ENCODE measurements at regions of chr2 and their contacts with region 1.

Region 1: DNA sequence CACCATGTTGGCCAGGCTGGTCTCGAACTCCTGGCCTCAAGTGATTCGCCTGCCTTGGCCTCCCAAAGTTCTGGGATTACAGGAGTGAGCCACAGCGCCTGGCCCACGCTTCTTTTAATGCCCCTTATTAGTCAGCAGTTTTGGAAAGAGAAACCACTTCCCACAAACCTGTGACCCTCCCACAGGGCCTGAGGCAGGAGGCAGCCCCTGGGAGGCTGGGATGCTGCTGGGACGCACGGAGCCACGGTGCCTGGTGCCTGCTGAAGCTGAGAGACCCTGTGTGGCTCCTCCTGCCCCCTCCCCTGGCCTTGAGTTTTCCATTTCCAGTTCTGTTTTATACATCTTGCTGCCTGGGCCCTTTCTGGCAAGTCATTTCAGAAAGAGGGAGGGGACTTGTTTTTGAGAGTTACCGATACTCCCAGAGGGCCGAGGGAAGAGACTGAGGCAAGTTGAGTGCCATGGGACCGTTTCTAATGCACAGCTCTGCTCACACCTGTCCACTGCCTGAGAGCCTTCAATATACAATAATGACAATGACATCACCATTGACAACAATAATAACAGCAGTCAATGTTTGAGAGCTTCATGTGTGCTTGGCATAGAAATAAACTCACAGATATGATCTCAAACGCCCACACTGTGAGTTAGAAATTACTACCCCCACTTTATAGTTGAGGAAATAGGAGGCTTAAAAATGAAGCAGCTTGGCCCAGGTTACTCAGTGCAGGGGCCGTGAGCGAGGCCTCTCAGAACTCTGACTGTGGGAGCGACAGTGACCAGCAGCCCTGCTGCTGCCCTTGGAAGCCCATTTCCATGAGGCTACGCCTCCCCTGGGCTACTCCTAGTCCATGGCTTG is 78.1 kb upstream of the YWHAQ start:
- DNase-seq: no peak
- H3K4me3 Mint-ChIP-seq: no peak overlapping the region
- H3K27ac Mint-ChIP-seq: peak overlapping the region; percentile 79
- H3K4me1 Mint-ChIP-seq: peaks cover 80% of the 10 kb centered on the region
- H3K27me3 Mint-ChIP-seq: no peaks in the 10 kb centered on the region

Region 2: DNA sequence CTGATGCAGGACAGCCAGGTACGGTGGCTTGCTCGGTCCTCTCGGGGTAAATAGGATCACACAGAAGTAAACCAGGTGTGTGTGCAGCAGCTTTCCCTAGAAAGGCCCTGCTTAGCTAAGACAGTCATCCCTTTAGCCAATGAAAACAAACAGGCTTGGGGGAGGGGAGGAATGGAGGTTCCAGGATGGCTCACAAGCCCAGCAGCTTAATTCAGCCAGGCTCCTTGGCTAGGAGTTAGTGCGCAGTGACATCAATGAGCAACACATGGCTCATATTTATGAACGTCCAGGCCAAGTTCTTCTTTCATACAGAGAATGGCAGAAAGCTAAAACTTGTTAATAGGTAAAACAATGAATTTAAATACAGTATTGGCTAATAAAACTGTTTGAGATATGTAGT is 224.4 kb before region 1 on chr2:
- CTCF ChIA-PET with region 1: no interaction called
- POLR2A ChIA-PET with region 1: no interaction called
- DNase-seq: no peak
- H3K4me3 Mint-ChIP-seq: no peak overlapping the region
- H3K27ac Mint-ChIP-seq: no peak overlapping the region
- H3K4me1 Mint-ChIP-seq: peaks cover 8% of the 10 kb centered on the region
- H3K27me3 Mint-ChIP-seq: no peaks in the 10 kb centered on the region

Region 3: DNA sequence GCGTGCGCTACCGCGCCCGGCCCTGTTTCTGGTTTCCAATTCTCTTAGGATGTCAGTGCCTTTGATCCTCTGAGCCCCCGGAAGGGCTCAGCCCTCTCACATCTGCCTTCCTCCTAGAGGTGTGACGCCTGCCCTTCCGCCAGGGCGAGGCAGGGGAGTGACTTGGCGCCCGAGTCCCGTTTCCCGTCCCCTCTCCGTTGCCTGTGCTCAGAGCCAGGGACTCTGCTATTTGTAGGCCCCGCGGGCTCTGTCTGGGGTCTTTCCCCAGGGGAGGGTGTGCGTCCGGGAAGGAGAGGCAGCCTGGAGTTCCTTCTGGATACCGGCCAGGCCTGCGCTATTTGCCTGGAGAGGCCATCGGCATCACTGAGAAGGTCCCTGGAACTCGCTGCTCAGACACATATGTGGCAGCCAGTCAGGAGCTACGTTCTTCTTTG is 30.6 kb after region 1 on chr2:
- CTCF ChIA-PET with region 1: interaction called, 9 read pairs
- POLR2A ChIA-PET with region 1: interaction called, 40 read pairs
- DNase-seq: peak; percentile 77
- H3K4me3 Mint-ChIP-seq: peak overlapping the region; percentile 72
- H3K27ac Mint-ChIP-seq: peak overlapping the region; percentile 93
- H3K4me1 Mint-ChIP-seq: peaks cover 61% of the 10 kb centered on the region
- H3K27me3 Mint-ChIP-seq: peaks cover 2% of the 10 kb centered on the region